Gastrocnemius medialis (tissue), 4 donors: ENCODE measurements at regions of chr13 and their contacts with region 1.

Region 1: DNA sequence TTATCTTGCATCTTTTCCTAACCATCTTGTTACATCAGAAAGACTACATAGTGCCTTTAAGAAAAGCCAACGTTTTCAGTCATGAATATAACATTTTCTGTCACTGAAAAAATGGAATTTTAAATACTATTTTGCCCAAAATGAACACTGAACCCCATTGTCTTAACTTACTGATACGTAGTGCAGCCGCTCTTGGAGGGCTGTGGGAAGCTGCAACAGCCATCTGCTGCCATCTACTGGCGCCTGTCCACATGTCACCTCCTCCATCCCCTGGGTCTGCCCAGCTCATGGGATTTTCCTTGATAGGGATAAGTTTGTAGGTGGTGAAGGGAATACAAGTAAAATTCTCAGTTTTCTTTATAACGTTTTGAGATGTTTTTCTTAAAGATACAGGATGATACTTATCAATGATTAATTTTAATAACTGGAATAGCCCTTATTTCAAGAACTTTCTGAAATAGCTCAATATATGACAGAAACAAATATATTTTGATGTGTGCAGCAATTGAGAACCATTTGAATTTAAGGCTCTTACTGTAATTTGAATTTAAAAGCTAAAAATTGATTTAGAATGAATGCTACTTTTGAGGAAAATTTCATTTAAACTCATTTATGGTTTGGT is 73.7 kb downstream of the GGACT start:
- DNase-seq: peak; percentile 56 to 64
- ATAC-seq: peak; percentile 75 to 86
- H3K4me3 ChIP-seq: no peak overlapping the region
- H3K27ac ChIP-seq: no peak overlapping the region
- H3K4me1 ChIP-seq: peaks cover 0 to 3% of the 10 kb centered on the region in 2 donors
- H3K27me3 ChIP-seq: no peaks in the 10 kb centered on the region
- CTCF ChIP-seq: peak; percentile 61 to 90 (median 80)
- POLR2A ChIP-seq: no peak

Region 2: GRCh38 chr13:99442273-99442895 is 1072.5 kb before region 1 on chr13:
- in situ Hi-C with region 1: no loop called
- intact Hi-C with region 1: loop called (anchors 10 kb)
- DNase-seq: no peak
- ATAC-seq: no peak
- H3K4me3 ChIP-seq: no peak overlapping the region
- H3K27ac ChIP-seq: no peak overlapping the region
- H3K4me1 ChIP-seq: no peaks in the 10 kb centered on the region
- H3K27me3 ChIP-seq: no peaks in the 10 kb centered on the region
- CTCF ChIP-seq: peak; percentile 64 to 96 (median 86)
- POLR2A ChIP-seq: no peak

Region 3: GRCh38 chr13:99656092-99656745 is 858.7 kb before region 1 on chr13:
- in situ Hi-C with region 1: loop called (anchors 5 to 25 kb)
- intact Hi-C with region 1: loop called (anchors 2 kb)
- DNase-seq: peak; percentile 51 to 59
- ATAC-seq: peak; percentile 79 to 83
- H3K4me3 ChIP-seq: no peak overlapping the region
- H3K27ac ChIP-seq: no peak overlapping the region
- H3K4me1 ChIP-seq: peaks cover 0 to 8% of the 10 kb centered on the region in 2 donors
- H3K27me3 ChIP-seq: no peaks in the 10 kb centered on the region
- CTCF ChIP-seq: peak; percentile 73 to 93 (median 84)
- POLR2A ChIP-seq: no peak

Region 4: DNA sequence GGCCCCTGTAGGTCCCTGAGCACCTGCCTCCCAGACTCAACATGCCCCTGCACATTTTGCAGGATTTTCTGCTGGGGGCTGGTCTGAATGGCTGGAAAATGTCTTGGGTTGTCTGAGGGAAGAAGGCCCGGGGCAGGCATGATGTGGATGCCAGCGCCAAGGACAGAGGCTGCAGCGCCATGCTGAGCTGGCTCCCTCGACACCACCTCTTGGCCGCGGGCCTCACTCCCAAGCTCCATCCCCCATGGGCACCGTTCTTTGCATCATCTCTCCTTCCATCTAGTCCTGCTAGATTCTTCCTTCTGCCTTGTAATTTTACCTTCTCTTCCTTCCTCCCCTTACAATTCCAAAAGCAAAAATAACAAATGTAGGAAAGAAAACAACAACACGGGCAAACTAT is 613.9 kb before region 1 on chr13:
- in situ Hi-C with region 1: loop called in 3 of 4 experiments (anchors 25 kb)
- intact Hi-C with region 1: loop called (anchors 5 kb)
- DNase-seq: no peak
- ATAC-seq: no peak
- H3K4me3 ChIP-seq: no peak overlapping the region
- H3K27ac ChIP-seq: no peak overlapping the region
- H3K4me1 ChIP-seq: no peaks in the 10 kb centered on the region
- H3K27me3 ChIP-seq: peaks cover 44 to 51% (median 45%) of the 10 kb centered on the region in 3 donors
- CTCF ChIP-seq: no peak
- POLR2A ChIP-seq: no peak

Region 5: DNA sequence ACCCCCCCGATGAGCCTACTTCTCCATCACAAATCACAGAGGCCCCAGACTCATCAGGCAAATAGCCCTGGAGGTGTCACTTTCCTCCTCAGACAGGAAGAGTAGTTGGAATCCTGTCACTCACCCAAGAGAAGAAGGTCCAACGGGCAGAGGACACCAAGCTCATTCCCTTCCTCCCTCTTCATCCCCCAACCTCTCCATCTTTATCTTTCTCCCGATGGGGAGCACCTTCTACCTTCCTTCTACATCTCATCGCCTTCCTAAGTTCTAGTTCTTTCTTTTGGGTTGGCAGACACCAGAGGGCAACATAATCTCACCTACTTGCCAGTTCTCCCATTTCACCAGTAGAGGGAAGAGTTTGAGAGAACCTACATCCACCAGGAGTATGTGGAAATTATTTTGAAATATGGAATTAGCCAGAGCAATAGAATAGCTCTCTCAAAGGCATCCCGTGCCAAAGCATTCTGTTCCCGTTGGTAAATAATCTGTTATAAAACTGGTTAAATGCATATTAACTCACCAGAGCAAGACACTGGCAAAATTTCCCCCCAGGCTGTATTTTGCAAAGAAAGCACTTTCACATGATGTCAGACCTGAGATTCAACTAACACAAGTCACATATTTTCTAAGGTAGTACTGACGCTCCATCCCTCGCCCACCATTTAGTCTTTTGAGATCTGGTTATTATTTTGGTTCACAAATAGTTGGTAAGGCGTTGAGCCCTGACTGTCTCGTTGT is 598.4 kb before region 1 on chr13:
- in situ Hi-C with region 1: loop called in 3 of 4 experiments (anchors 25 kb)
- intact Hi-C with region 1: loop called (anchors 2 kb)
- DNase-seq: no peak
- ATAC-seq: no peak
- H3K4me3 ChIP-seq: no peak overlapping the region
- H3K27ac ChIP-seq: no peak overlapping the region
- H3K4me1 ChIP-seq: no peaks in the 10 kb centered on the region
- H3K27me3 ChIP-seq: peaks cover 0 to 22% (median 16%) of the 10 kb centered on the region in 3 donors
- CTCF ChIP-seq: peak in 4 of 5 experiments; percentile 24 to 65 (median 49)
- POLR2A ChIP-seq: no peak

Region 6: GRCh38 chr13:100235311-100235901 is 279.5 kb before region 1 on chr13:
- in situ Hi-C with region 1: loop called in 1 of 4 experiments (anchors 10 kb)
- intact Hi-C with region 1: no loop called
- DNase-seq: no peak
- ATAC-seq: no peak
- H3K4me3 ChIP-seq: no peak overlapping the region
- H3K27ac ChIP-seq: no peak overlapping the region
- H3K4me1 ChIP-seq: peaks cover 21 to 30% of the 10 kb centered on the region in 2 donors
- H3K27me3 ChIP-seq: no peaks in the 10 kb centered on the region
- CTCF ChIP-seq: peak in 4 of 5 experiments; percentile 27 to 53 (median 44)
- POLR2A ChIP-seq: no peak

Region 7: GRCh38 chr13:100542826-100543156 is 27.9 kb after region 1 on chr13:
- in situ Hi-C with region 1: no loop called
- intact Hi-C with region 1: no loop called
- DNase-seq: no peak
- ATAC-seq: no peak
- H3K4me3 ChIP-seq: no peak overlapping the region
- H3K27ac ChIP-seq: no peak overlapping the region
- H3K4me1 ChIP-seq: no peaks in the 10 kb centered on the region
- H3K27me3 ChIP-seq: no peaks in the 10 kb centered on the region
- CTCF ChIP-seq: peak in 1 of 5 experiments; percentile 24
- POLR2A ChIP-seq: no peak